ENCODE measurements at regions of chr5 and their contacts with region 1.

Region 1: GRCh38 chr5:39080597-39081204 is 6.5 kb upstream of the RICTOR start:
- DNase-seq: peak; percentile 53
- ATAC-seq: peak; percentile 47
- H3K4me3 Mint-ChIP-seq: no peak overlapping the region
- H3K27ac Mint-ChIP-seq: no peak overlapping the region
- H3K4me1 Mint-ChIP-seq: peaks cover 19% of the 10 kb centered on the region
- H3K27me3 Mint-ChIP-seq: peaks cover 29% of the 10 kb centered on the region

Region 2: GRCh38 chr5:38441453-38442246 is 639.1 kb before region 1 on chr5:
- CTCF ChIA-PET with region 1: interaction called, 10 read pairs
- POLR2A ChIA-PET with region 1: no interaction called
- DNase-seq: peak; percentile 89
- ATAC-seq: peak; percentile 99
- H3K4me3 Mint-ChIP-seq: no peak overlapping the region
- H3K27ac Mint-ChIP-seq: no peak overlapping the region
- H3K4me1 Mint-ChIP-seq: no peaks in the 10 kb centered on the region
- H3K27me3 Mint-ChIP-seq: peaks cover 34% of the 10 kb centered on the region

Region 3: DNA sequence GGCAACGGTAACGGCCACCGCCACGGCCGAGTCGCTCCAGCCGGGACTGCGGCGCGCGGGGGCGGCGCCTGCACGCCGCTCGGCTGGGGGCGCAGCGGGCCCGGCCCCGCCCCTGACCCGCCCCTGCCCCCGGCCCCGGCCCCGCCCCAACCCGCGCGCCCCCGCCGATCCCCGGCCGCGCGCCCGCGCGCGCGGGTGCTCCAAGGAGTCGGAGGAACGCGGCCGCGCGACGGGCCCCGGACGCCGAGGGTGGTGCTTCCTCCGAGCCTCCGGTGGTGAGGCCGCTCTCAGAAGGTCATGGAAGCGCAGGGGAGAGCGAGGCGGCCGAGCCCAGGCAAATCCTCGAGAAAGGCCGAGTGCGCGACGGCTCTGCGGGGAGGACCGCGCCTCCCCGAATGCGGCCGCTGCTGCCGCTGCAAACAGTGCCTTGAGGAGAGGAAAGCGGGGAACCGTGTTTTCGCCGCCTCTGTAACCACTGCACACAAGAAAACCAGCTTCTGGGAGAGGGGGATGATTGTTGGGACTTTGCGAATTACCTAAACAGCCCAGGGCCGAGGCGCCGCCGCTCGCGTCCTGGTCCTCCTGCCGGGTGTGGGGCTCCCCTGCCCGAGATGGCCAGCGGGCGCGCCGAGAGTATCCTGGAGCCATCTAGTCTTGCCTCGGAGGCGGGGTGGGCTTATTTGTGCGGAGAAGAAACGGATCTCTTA is 523.9 kb before region 1 on chr5 and contains the start of gene LIFR:
- CTCF ChIA-PET with region 1: no interaction called
- POLR2A ChIA-PET with region 1: no interaction called
- DNase-seq: peak; percentile 51
- ATAC-seq: peak; percentile 78
- H3K4me3 Mint-ChIP-seq: peak within 1 kb of the TSS; percentile 72
- H3K27ac Mint-ChIP-seq: no peak within 1 kb of the TSS
- H3K4me1 Mint-ChIP-seq: peaks cover 13% of the 10 kb centered on the region
- H3K27me3 Mint-ChIP-seq: peaks cover 61% of the 10 kb centered on the region
- total RNA-seq, gene LIFR: not detected

Region 4: DNA sequence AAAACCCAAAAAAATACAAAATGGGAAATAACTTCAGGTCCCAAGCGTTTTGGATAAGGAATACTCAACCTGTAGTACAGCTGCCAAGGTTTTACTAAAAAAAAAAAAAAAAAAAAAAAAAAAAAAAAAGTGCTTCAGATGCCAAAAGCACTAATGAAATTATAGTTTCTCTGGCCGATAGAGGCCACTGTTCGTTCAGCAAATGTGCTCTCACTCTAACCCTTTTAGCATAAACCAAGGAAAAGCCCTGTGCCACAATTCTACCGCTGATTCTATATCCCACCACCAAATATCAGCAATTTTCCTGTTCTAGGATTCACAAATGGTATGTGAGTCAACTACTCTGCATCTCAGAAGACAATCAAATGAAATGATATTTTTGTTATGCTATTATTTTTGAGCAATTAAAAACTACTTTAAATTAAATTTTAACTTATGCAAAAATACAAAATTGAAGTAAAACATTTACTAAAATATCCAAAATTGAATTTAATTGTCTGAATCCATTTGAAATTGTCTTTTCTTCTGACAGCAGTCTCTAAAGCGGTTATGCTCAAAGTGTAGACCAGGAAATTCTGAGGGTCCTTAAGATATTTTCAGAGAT is 86.3 kb before region 1 on chr5:
- CTCF ChIA-PET with region 1: interaction called, 10 read pairs
- POLR2A ChIA-PET with region 1: no interaction called
- DNase-seq: peak; percentile 58
- ATAC-seq: peak; percentile 53
- H3K4me3 Mint-ChIP-seq: no peak overlapping the region
- H3K27ac Mint-ChIP-seq: no peak overlapping the region
- H3K4me1 Mint-ChIP-seq: peaks cover 14% of the 10 kb centered on the region
- H3K27me3 Mint-ChIP-seq: no peaks in the 10 kb centered on the region

Region 5: DNA sequence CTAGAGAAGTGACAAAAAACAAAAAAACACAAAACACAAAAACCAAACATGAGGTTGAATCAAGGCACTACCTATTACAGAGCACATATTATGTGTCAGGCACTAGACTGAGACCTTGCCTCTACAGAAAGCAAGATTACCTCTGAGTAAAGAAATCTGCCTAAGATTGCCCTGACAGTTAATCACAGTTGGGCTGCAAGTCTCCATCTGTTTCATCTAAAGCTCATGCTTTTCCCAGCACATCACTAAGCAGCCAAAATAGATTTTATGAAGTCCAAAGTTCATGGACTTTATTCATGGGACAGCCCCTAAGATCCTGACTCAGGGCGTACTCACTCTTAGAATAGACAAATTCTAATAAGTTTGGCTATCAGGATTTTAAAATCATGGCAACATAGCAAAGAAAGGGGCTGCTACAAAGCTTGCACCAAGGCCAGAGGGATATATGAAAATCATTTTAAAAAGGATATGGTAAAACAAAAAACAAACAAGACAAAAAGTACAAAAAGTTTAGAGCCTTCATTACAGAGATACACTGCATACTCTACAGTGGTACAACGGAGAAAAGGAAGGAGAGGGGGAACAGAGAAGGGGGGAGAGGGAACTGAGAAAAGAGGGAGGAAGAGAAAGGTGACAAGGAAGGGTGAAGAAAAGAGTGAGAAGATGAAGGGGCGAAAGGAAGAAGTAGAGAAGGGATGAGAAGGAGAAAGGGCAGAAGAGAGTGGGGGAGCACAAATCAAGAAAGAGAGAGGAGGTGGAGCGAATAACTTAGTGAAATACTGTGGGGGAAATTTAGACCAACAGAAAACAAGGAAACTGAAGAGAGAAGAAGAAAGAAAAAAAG is 64.7 kb before region 1 on chr5:
- CTCF ChIA-PET with region 1: interaction called, 10 read pairs
- POLR2A ChIA-PET with region 1: no interaction called
- DNase-seq: no peak
- ATAC-seq: no peak
- H3K4me3 Mint-ChIP-seq: no peak overlapping the region
- H3K27ac Mint-ChIP-seq: peak overlapping the region; percentile 17
- H3K4me1 Mint-ChIP-seq: peaks cover 17% of the 10 kb centered on the region
- H3K27me3 Mint-ChIP-seq: no peaks in the 10 kb centered on the region

Region 6: GRCh38 chr5:39092581-39093350 is 12.1 kb after region 1 on chr5:
- CTCF ChIA-PET with region 1: interaction called, 14 read pairs
- POLR2A ChIA-PET with region 1: no interaction called
- DNase-seq: no peak
- ATAC-seq: no peak
- H3K4me3 Mint-ChIP-seq: no peak overlapping the region
- H3K27ac Mint-ChIP-seq: no peak overlapping the region
- H3K4me1 Mint-ChIP-seq: no peaks in the 10 kb centered on the region
- H3K27me3 Mint-ChIP-seq: peaks cover 29% of the 10 kb centered on the region

Region 7: GRCh38 chr5:39116347-39117170 is 35.9 kb after region 1 on chr5:
- CTCF ChIA-PET with region 1: interaction called, 11 read pairs
- POLR2A ChIA-PET with region 1: no interaction called
- DNase-seq: no peak
- ATAC-seq: no peak
- H3K4me3 Mint-ChIP-seq: no peak overlapping the region
- H3K27ac Mint-ChIP-seq: no peak overlapping the region
- H3K4me1 Mint-ChIP-seq: peaks cover 14% of the 10 kb centered on the region
- H3K27me3 Mint-ChIP-seq: no peaks in the 10 kb centered on the region

Measured in activated CD8-positive, alpha-beta T cell treated with anti-CD3 and anti-CD28 coated beads, Interleukin-2, amount 10 ng/mL, durations not matched to agents 7 days and 5 days (primary cell).